Activated naive CD8-positive, alpha-beta T cell treated with anti-CD3 and anti-CD28 coated beads, Interleukin-2, amount 10 ng/mL, durations not matched to agents 7 days and 5 days (primary cell): ENCODE measurements at regions of chr9 and their contacts with region 1.

Region 1: DNA sequence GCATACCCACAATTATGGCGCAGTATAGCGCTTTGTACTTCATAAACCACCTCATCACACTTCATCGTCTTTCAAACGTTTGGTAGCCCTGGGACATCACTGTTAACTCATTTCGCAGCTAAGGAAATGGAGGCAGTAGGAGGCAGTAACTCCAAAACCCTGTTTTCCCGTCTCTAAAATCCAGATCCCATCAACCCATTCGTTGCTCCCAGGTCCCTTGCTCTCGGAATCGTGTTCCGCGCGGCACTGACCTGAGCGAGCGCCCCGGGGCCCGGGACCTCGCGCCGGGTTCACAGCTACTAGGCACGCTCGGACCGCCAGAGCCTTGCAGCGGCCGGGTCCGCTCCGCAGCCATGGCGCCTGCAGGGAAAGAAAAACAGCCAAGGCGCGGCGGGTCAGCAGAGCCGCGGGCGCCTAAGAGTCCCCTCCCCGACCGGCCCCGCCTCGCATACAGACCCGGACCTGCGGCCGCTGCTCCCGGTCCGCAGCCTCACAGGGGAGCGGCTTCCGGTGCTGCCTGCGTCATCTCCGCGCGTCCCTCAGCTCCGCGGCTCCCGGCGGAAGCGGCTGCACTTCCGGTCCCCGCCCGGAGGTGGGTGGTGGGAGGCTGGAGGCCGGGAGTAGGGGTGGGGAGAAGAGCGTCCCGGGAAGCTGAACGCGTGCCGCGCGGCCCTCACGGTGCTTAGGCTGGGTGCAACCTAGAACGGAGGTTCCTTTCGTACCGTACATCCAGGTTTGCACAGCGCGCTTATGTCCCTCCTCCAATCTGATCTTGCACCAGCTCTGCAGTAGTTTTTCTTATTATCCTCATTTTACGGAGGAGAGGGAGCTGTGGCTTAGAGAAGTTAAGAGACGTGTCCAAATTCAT is at the start of gene FBXW2:
- DNase-seq: peak; percentile 92
- ATAC-seq: peak; percentile 90
- H3K4me3 Mint-ChIP-seq: peak within 1 kb of the TSS; percentile 92
- H3K27ac Mint-ChIP-seq: peak within 1 kb of the TSS; percentile 96
- H3K4me1 Mint-ChIP-seq: peaks cover 40% of the 10 kb centered on the region
- H3K27me3 Mint-ChIP-seq: no peaks in the 10 kb centered on the region
- total RNA-seq, gene FBXW2: 80.5 to 87.8 TPM

Region 2: DNA sequence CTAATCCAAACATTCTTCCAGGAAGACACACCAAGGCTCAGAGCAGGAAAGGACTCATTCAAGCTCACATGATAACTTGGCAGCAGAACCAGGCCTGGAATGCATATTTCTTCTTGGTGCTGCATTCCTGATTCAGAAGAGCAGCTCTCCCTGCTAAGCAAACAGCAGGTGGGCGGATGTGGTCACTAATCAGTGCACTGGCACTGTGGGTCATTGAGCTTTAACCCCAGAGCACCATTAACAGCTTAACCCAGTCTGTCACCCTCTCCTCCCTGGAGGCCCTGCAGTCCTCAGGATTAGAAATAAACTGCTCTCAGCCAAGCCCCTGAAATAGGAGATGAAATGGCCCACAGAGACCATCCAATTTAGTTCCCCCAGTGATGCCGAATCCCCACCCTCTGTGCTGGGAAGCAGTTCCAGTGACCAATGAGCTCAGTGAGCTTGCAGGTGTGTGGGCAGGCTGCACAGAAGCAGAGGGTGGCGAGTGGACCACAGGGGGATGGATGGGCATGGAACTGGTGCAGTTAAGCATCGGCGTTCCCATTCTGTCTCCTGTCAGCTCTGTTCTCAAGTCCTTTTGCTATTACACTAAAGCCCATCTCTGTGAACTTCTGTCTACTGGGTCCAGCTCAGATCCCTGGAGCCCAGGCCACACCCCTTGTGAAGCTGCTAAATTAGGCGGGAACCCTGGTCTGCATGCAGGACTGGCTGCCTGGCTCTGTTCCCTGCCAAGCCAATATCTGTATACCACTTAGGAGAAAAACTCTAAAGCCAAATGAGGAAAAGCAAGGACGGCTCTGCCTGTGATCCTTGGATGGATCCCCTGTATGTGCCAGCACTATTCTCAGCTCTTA is 62.2 kb before region 1 on chr9:
- POLR2A ChIA-PET with region 1: no interaction called
- DNase-seq: no peak
- ATAC-seq: no peak
- H3K4me3 Mint-ChIP-seq: no peak overlapping the region
- H3K27ac Mint-ChIP-seq: no peak overlapping the region
- H3K4me1 Mint-ChIP-seq: peaks cover 25% of the 10 kb centered on the region
- H3K27me3 Mint-ChIP-seq: no peaks in the 10 kb centered on the region

Region 3: DNA sequence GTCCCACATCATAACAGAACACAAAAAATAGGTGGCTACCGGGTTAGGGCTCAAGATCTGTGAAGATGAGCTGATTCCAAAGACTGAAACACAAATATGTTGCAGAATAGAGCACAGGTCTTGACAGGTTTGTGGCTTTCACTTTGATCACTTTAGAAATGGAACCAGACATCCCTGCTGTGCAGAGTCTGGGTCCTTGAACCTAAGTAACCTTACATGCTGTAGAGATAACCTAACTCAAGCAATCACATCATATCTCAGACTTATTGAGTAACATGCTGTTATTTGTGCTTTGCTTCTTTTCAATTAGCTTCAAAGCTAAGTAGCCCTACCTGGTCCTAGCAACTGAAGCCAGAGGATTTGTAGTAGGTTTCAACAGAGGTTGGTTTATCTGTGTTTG is 24.2 kb before region 1 on chr9:
- POLR2A ChIA-PET with region 1: interaction called, 10 read pairs
- DNase-seq: no peak
- ATAC-seq: peak; percentile 82
- H3K4me3 Mint-ChIP-seq: no peak overlapping the region
- H3K27ac Mint-ChIP-seq: peak overlapping the region; percentile 70
- H3K4me1 Mint-ChIP-seq: peaks cover 42% of the 10 kb centered on the region
- H3K27me3 Mint-ChIP-seq: no peaks in the 10 kb centered on the region

Region 4: GRCh38 chr9:120820095-120820494 is 27.0 kb after region 1 on chr9:
- POLR2A ChIA-PET with region 1: no interaction called
- DNase-seq: no peak
- ATAC-seq: no peak
- H3K4me3 Mint-ChIP-seq: no peak overlapping the region
- H3K27ac Mint-ChIP-seq: no peak overlapping the region
- H3K4me1 Mint-ChIP-seq: peaks cover 1% of the 10 kb centered on the region
- H3K27me3 Mint-ChIP-seq: no peaks in the 10 kb centered on the region